ENCODE measurements at regions of chr6 and their contacts with region 1.

Region 1: GRCh38 chr6:136607932-136608772 is 57.9 kb upstream of the MAP7 start:
- DNase-seq: peak; percentile 63 to 81 (median 77)
- ATAC-seq: peak; percentile 100
- H3K4me3 ChIP-seq: no peak overlapping the region
- H3K4me3 Mint-ChIP-seq: no peak overlapping the region
- H3K27ac ChIP-seq: no peak overlapping the region
- H3K27ac Mint-ChIP-seq: no peak overlapping the region
- H3K4me1 ChIP-seq: no peaks in the 10 kb centered on the region
- H3K4me1 Mint-ChIP-seq: peaks cover 3% of the 10 kb centered on the region
- H3K27me3 ChIP-seq: no peaks in the 10 kb centered on the region
- H3K27me3 Mint-ChIP-seq: no peaks in the 10 kb centered on the region
- CTCF ChIP-seq: peak; percentile 81

Region 2: DNA sequence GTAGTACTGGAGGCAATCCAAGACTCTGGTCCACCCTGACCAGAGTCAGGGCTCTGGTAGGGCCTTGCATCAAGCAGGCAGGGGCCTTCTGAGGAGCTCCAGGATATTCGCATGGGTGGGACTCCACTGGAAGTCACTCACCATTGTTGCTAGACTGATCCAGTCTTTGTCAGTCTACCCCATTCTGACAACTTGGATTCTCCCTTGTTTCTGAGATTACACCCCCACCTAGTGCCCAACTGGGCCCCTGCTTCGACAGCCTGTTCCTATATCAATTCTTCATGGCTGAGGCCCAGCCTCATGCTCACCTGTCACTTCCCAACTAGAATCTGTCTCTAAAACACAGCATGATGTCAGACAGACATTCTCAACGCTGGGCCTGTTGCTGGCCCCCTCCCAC is 319.1 kb after region 1 on chr6:
- CTCF ChIA-PET with region 1: no interaction called
- POLR2A ChIA-PET with region 1: interaction called, 3 read pairs
- intact Hi-C with region 1: loop called in 1 of 2 experiments (anchors 1 kb)
- DNase-seq: peak in 3 of 9 experiments; percentile 5 to 31 (median 23)
- ATAC-seq: peak; percentile 46
- H3K4me3 ChIP-seq: no peak overlapping the region
- H3K4me3 Mint-ChIP-seq: no peak overlapping the region
- H3K27ac ChIP-seq: no peak overlapping the region
- H3K27ac Mint-ChIP-seq: no peak overlapping the region
- H3K4me1 ChIP-seq: peaks cover 9% of the 10 kb centered on the region
- H3K4me1 Mint-ChIP-seq: peaks cover 17% of the 10 kb centered on the region
- H3K27me3 ChIP-seq: peaks cover 9 to 13% of the 10 kb centered on the region in 2 experiments
- H3K27me3 Mint-ChIP-seq: peaks cover 39% of the 10 kb centered on the region
- CTCF ChIP-seq: no peak

Measured in CD8-positive, alpha-beta T cell (primary cell).